ENCODE measurements at regions of chr3 and their contacts with region 1.

Region 1: GRCh38 chr3:122258757-122259371 is 66.2 kb upstream of the CSTA start:
- H3K4me3 Mint-ChIP-seq: no peak overlapping the region
- H3K27ac Mint-ChIP-seq: no peak overlapping the region
- H3K4me1 Mint-ChIP-seq: peaks cover 51% of the 10 kb centered on the region
- H3K27me3 Mint-ChIP-seq: no peaks in the 10 kb centered on the region

Region 2: DNA sequence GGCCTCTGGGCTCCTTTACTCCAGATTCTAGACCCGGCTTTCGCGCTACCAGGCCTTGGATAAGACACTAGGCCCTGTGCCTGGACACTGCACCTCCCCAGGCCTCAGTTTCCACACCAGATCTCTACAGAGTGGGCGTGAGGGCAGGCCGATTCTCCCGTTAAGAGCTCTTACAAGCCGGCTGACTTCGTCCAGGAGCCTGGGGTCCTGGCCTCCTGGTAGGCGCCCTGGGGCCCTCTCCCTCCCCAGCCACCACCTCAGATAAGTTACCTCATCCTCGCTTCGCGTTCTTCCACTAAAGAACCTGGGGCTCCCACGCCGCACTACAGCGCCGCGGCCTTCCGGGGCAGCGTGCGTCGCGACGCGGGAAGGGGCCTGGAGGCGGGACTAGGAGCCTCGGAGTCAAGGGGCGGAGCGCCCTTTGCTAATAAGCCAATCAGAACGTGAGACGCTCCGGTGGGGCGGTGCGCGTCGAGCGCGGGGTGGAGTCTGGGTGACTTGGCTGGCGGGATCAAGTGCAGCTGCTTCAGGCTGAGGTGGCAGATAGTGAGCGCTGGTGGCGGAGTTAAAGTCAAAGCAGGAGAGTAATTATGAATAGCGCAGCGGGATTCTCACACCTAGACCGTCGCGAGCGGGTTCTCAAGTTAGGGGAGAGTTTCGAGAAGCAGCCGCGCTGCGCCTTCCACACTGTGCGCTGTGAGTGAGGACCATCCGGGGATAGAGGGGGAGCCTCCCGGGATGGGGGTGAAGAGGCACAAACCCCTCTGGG is 424.0 kb before region 1 on chr3 and contains the starts of genes EAF2 and IQCB1:
- intact Hi-C with region 1: loop called (anchors 10 kb)
- H3K4me3 Mint-ChIP-seq: peak within 1 kb of the TSS; percentile 95
- H3K27ac Mint-ChIP-seq: peak within 1 kb of the TSS; percentile 98
- H3K4me1 Mint-ChIP-seq: peaks cover 28% of the 10 kb centered on the region
- H3K27me3 Mint-ChIP-seq: no peaks in the 10 kb centered on the region

Region 3: GRCh38 chr3:121871430-121871829 is 387.4 kb before region 1 on chr3:
- intact Hi-C with region 1: no loop called
- H3K4me3 Mint-ChIP-seq: no peak overlapping the region
- H3K27ac Mint-ChIP-seq: no peak overlapping the region
- H3K4me1 Mint-ChIP-seq: peaks cover 35% of the 10 kb centered on the region
- H3K27me3 Mint-ChIP-seq: no peaks in the 10 kb centered on the region

Region 4: DNA sequence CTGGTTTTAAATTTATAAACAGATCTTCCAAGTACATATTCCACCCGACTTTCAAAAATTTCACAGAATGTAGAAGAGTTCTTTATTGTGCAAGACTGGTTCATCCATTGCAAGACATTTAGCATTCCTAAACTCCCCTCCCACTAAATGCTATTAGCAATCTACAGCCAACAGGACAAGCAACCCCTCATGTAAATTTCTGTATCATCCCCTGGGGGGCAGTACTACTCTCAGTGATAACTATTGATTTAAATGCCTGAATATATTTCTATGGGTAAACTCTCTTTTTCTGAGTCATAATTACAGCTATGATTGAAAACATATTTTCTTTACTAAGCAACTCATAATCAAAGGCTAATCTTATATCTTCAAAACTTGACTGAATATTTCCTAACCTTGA is 375.4 kb before region 1 on chr3:
- intact Hi-C with region 1: loop called (anchors 10 kb)
- H3K4me3 Mint-ChIP-seq: no peak overlapping the region
- H3K27ac Mint-ChIP-seq: no peak overlapping the region
- H3K4me1 Mint-ChIP-seq: peaks cover 11% of the 10 kb centered on the region
- H3K27me3 Mint-ChIP-seq: no peaks in the 10 kb centered on the region

Region 5: GRCh38 chr3:122101646-122102045 is 157.2 kb before region 1 on chr3:
- intact Hi-C with region 1: loop called (anchors 2 kb)
- H3K4me3 Mint-ChIP-seq: no peak overlapping the region
- H3K27ac Mint-ChIP-seq: peak overlapping the region; percentile 57
- H3K4me1 Mint-ChIP-seq: peaks cover 22% of the 10 kb centered on the region
- H3K27me3 Mint-ChIP-seq: no peaks in the 10 kb centered on the region

Region 6: GRCh38 chr3:122233101-122233952 is 25.5 kb before region 1 on chr3:
- intact Hi-C with region 1: loop called (anchors 1 kb)
- H3K4me3 Mint-ChIP-seq: peak overlapping the region; percentile 42
- H3K27ac Mint-ChIP-seq: peak overlapping the region; percentile 79
- H3K4me1 Mint-ChIP-seq: peaks cover 56% of the 10 kb centered on the region
- H3K27me3 Mint-ChIP-seq: peaks cover 2% of the 10 kb centered on the region

Region 7: DNA sequence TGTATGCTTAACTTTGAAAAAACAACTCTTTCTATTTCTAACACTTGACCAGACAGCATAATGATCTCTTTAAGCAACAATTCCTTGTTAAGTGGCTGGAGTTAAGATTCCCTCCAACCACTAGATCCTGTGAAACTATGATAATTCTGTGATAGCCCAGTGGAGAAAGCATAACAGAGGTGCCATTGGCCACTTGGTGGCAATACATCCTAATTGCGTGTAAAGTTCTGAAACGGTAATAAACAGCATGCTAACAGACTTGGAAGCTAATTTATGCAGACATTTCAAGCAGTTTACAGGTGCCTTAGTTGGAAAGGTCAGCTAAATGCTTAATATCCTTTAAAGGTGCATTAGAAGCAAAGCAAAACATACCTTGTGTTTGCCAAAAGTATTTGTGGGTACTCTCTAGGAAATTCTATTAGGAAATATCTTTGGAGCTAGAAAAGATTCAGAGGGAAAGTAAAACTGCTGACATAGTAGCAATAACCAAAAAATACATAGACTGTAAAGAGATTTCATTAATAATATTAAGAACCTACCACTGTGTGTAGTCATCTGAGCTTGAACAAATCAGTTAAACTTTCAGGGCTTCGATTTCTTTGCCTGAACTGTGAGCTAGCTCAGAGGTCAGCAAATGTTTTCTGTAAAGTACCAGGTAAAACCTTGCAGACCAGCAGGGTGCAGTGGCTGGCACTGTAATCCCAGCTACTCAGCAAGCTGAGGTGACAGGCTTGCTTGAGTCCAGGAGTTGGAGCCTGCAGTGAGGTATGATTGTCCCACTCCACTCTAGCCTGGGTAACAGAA is 47.2 kb after region 1 on chr3:
- intact Hi-C with region 1: no loop called
- H3K4me3 Mint-ChIP-seq: no peak overlapping the region
- H3K27ac Mint-ChIP-seq: no peak overlapping the region
- H3K4me1 Mint-ChIP-seq: peaks cover 17% of the 10 kb centered on the region
- H3K27me3 Mint-ChIP-seq: no peaks in the 10 kb centered on the region

Region 8: DNA sequence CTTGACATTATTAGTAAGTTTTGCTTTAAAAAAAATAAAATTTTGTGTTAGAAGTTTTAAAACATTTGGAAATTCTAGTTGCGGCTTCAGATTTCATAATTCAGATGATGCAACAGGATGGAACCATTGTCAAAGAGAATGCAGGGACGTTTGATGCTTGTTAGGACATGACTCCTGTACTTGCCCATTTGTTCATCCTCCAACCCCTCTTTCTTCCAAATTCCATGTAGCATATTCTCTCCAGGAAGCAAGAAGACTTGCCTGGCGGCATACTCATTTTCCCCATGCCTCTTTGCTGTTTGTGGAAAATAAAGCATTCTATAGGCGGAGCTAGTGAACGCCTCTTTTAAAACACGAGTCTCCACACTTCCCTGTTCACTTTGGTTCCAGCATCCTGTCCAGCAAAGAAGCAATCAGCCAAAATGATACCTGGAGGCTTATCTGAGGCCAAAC is 66.0 kb after region 1 on chr3 and contains the start of gene CSTA:
- intact Hi-C with region 1: no loop called
- H3K4me3 Mint-ChIP-seq: peak within 1 kb of the TSS; percentile 67
- H3K27ac Mint-ChIP-seq: peak within 1 kb of the TSS; percentile 82
- H3K4me1 Mint-ChIP-seq: peaks cover 34% of the 10 kb centered on the region
- H3K27me3 Mint-ChIP-seq: no peaks in the 10 kb centered on the region

Measured in dendritic cell treated with granulocyte-macrophage colony-stimulating factor and Interleukin-4, amounts not matched to agents 40 ng/mL and 50 ng/mL, for 4 days (primary cell).